ENCODE measurements at regions of chr17 and their contacts with region 1.

Region 1: DNA sequence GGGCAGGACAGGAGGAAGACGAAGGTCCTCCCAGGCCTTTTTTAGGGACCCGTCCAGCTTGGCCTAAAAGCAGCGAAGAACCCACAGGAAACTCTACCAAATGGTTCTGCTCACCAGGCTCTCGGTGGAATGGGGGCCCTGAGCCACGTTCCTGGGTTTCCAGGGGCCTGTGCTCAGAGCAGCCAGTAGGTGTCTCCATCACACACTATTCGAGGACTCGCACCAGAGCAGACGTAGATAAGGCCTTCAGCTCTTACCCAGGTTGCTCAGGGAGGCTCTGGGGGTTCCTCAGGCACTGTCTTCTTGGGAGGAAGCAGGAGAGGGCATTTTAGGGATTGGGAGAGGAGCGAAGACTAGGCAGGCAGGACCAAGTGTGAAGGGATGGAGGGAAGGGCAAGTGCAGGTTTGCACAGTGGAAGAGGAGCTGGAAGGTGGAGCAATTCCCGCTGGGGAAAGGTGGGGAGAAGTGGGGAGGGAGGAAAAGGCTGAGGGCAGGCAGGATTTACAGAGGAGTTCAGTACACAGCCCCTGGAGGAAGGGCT is 157.1 kb downstream of the RGS9 start:
- DNase-seq: peak; percentile 70
- ATAC-seq: peak; percentile 95
- H3K4me3 Mint-ChIP-seq: no peak overlapping the region
- H3K27ac Mint-ChIP-seq: no peak overlapping the region
- H3K4me1 Mint-ChIP-seq: no peaks in the 10 kb centered on the region
- H3K27me3 Mint-ChIP-seq: no peaks in the 10 kb centered on the region
- CTCF ChIP-seq: peak; percentile 77

Region 2: DNA sequence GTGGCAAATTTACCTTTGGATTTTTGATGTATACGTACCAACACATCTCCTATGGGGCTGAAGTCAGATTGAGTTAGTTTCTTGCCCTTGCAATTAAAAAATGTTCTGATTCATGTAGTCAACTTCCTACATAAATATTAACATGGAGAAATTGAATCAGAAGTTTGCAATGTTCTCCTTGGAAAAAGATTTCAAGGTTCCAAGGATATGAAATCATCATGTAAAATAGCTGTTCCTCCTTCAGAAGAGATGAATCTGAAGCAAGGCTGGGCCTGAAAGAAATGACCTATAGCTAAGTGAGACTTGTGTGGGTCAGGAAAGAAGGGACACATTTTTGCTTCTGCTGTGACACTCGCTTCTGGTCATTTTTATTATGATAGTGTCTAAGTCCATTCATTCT is 25.4 kb before region 1 on chr17:
- CTCF ChIA-PET with region 1: interaction called, 10 read pairs
- POLR2A ChIA-PET with region 1: no interaction called
- intact Hi-C with region 1: no loop called
- DNase-seq: no peak
- ATAC-seq: no peak
- H3K4me3 Mint-ChIP-seq: no peak overlapping the region
- H3K27ac Mint-ChIP-seq: no peak overlapping the region
- H3K4me1 Mint-ChIP-seq: peaks cover 10% of the 10 kb centered on the region
- H3K27me3 Mint-ChIP-seq: peaks cover 5% of the 10 kb centered on the region
- CTCF ChIP-seq: no peak

Region 3: GRCh38 chr17:65283704-65284103 is 10.5 kb before region 1 on chr17:
- CTCF ChIA-PET with region 1: interaction called, 14 read pairs
- POLR2A ChIA-PET with region 1: no interaction called
- intact Hi-C with region 1: no loop called
- DNase-seq: no peak
- ATAC-seq: no peak
- H3K4me3 Mint-ChIP-seq: no peak overlapping the region
- H3K27ac Mint-ChIP-seq: no peak overlapping the region
- H3K4me1 Mint-ChIP-seq: no peaks in the 10 kb centered on the region
- H3K27me3 Mint-ChIP-seq: peaks cover 1% of the 10 kb centered on the region
- CTCF ChIP-seq: no peak

Region 4: GRCh38 chr17:65794572-65794971 is 500.3 kb after region 1 on chr17:
- CTCF ChIA-PET with region 1: interaction called, 15 read pairs
- POLR2A ChIA-PET with region 1: no interaction called
- intact Hi-C with region 1: no loop called
- DNase-seq: peak; percentile 12
- ATAC-seq: no peak
- H3K4me3 Mint-ChIP-seq: no peak overlapping the region
- H3K27ac Mint-ChIP-seq: no peak overlapping the region
- H3K4me1 Mint-ChIP-seq: peaks cover 10% of the 10 kb centered on the region
- H3K27me3 Mint-ChIP-seq: peaks cover 5% of the 10 kb centered on the region
- CTCF ChIP-seq: peak; percentile 40

Region 5: DNA sequence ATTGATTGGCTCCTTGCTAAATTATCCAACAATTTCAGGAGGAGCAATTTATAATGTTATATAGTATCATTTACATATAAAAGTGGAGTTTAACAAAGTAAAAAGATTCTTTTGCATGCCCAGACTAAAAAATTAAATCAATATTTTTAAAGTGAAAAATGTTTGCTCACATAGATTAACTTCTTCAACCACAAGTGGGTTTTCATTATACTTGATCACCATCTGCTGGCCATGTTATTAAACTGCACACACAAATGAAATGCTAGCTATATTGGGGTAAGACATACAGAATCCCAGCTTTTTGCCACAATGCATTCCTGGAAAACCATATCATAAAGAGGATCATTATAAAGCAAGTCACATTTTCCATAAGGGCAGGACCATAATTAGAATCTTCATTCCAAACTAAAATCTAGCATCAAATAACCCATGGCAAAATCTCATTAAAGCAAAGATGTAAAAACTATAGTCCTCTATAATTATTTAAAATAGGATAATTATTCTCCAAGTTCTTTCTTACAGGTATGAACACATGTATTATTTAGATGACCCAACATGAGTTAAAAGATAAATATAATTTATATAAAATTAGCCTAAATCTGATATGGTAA is 871.4 kb after region 1 on chr17:
- CTCF ChIA-PET with region 1: interaction called, 30 read pairs
- POLR2A ChIA-PET with region 1: no interaction called
- intact Hi-C with region 1: no loop called
- DNase-seq: peak; percentile 6
- ATAC-seq: peak; percentile 47
- H3K4me3 Mint-ChIP-seq: no peak overlapping the region
- H3K27ac Mint-ChIP-seq: no peak overlapping the region
- H3K4me1 Mint-ChIP-seq: peaks cover 8% of the 10 kb centered on the region
- H3K27me3 Mint-ChIP-seq: no peaks in the 10 kb centered on the region
- CTCF ChIP-seq: peak; percentile 84